ENCODE measurements at regions of chr1 and their contacts with region 1.

Region 1: DNA sequence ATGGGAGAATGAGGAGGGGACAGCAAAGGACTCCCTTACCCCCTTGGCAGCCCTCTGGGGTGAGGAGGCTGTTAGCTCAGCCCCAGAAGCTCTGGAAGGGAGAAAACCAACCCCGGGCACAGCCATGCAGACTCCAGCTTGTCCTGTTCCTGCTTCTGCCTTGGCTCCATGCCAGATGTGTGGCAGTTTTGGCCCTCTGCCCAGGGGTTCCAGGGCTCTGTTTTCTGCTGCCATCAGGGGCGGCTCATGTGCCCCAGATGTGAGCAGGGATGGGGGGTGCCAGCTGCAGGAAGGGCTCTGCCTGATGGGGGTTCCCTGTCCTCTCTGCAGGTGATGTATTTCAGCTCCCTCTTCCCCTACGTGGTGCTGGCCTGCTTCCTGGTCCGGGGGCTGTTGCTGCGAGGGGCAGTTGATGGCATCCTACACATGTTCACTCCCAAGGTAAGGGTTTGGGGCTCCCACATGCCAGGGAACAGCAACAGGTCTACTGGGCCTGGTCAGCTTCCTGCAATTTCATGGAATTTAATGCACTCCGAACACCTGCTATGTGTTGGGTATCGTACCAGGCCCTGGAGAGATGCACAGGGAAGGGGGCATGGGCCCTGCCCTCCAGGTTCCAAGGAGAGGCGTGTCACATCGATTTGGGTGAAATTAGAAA is 26.1 kb downstream of the SLC6A17 start:
- DNase-seq: peak; percentile 86
- H3K4me3 ChIP-seq: no peak overlapping the region
- H3K27ac ChIP-seq: peak overlapping the region in 1 of 2 experiments; percentile 92; a peak in 2 of 4 replicates
- H3K4me1 ChIP-seq: peaks cover 0 to 62% of the 10 kb centered on the region in 2 experiments; a peak in 2 of 4 replicates
- H3K27me3 ChIP-seq: no peaks in the 10 kb centered on the region
- CTCF ChIP-seq: no peak
- EP300 ChIP-seq: peak in 1 of 2 experiments; percentile 90; a peak in 2 of 4 replicates
- RAD21 ChIP-seq: no peak; the same call in 1 of the 2 replicates

Region 2: DNA sequence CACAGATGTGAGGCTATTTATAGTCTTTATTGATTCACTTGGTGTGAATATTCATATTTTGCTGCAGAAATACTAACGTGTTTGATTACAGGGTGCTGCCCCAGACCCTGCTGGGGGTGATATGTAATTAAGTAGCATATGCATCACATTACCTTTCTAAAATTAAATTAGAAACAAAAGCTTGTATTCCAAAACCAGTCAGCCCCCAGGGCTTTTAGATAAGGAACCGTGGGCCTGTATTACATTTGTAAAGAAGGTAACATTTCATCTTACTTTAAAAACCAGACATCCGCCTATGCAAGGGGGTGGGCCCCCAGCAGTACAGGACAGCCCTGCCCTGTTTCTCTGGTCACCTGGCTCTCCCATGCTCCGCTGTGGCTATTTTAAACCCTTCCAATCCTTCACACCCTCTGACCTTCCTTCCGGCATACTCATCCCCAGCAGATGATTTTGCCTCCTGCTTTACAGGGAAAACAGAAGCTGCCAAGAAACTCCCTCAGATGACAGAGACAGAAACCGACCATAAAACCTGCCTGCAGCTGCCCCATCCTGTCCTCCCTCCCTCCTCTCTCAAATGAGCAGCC is 11.7 kb after region 1 on chr1:
- CTCF ChIA-PET with region 1: interaction called, 25 read pairs
- POLR2A ChIA-PET with region 1: interaction called, 6 read pairs
- DNase-seq: peak; percentile 77
- H3K4me3 ChIP-seq: no peak overlapping the region
- H3K27ac ChIP-seq: peak overlapping the region in 1 of 2 experiments; percentile 95; a peak in 2 of 4 replicates
- H3K4me1 ChIP-seq: peaks cover 4 to 55% of the 10 kb centered on the region in 2 experiments; a peak in 2 of 4 replicates
- H3K27me3 ChIP-seq: no peaks in the 10 kb centered on the region
- CTCF ChIP-seq: no peak
- EP300 ChIP-seq: peak in 1 of 2 experiments; percentile 93; a peak in 2 of 4 replicates
- RAD21 ChIP-seq: no peak